ENCODE measurements at regions of chr3 and their contacts with region 1.

Region 1: DNA sequence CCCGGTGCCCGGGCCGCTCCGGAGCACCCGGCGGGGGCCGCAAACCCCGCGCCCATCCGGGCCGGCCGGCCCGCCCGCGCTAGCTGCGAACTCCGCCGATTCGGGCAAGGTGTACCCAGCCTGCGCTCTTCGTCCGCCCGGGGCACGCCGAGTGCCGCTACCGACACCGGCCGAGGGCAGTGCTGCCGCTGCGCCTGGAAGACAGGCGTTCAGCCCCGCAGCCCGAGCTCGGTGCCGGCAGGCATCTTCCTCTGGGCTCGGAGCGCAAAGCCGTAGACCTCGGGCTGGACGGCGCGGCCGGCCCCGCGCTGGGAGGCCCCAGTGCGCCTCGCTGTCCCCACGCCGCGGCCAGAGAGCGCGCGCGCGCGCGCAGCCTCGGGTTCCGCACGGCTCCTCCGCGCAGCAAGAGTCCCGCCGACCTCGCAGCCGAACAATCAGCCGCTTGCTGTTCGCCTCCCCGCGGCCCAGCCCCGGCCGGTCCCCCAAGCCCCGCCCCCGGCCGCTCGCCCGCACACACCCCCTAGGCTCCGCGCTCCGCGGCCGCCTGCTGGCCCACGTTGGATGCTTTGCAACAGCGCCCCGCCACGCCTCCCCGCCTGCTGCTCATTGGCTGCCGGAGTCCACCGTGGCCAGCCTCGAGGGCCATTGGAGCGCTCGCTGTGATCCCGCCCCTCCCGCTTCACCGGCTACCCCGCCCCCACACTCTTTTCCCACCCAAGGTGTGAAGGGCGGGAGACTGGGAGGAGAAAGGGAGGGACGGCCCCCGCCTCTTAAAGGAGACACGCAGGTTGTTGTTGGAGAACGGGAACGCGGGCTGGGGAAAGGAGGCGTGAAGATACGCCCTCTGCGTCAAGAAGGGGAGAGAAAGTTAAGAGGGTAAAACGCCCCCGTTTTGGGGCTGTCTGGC is at the start of gene LRIG1:
- DNase-seq: peak; percentile 98 to 100 (median 99)
- H3K4me3 ChIP-seq: peak within 1 kb of the TSS; percentile 65 to 98 (median 88)
- H3K27ac ChIP-seq: peak within 1 kb of the TSS; percentile 32 to 98 (median 92)
- H3K27me3 ChIP-seq: no peaks in the 10 kb centered on the region
- CTCF ChIP-seq: peak in 51 of 56 donors; percentile 13 to 76 (median 52)
- total RNA-seq, gene LRIG1: 65.6 to 291 (median 118) TPM

Region 2: GRCh38 chr3:66261355-66261754 is 239.5 kb before region 1 on chr3:
- intact Hi-C with region 1: loop called in 1 of 2 experiments (anchors 10 kb)
- DNase-seq: no peak
- H3K4me3 ChIP-seq: no peak overlapping the region
- H3K27ac ChIP-seq: no peak overlapping the region
- H3K27me3 ChIP-seq: no peaks in the 10 kb centered on the region
- CTCF ChIP-seq: no peak

Region 3: GRCh38 chr3:66418475-66418931 is 82.3 kb before region 1 on chr3:
- intact Hi-C with region 1: loop called in 1 of 2 experiments (anchors 2 kb)
- DNase-seq: peak in 8 of 10 donors; percentile 68 to 87 (median 77)
- H3K4me3 ChIP-seq: peak overlapping the region in 11 of 59 donors; percentile 4 to 35 (median 12)
- H3K27ac ChIP-seq: peak overlapping the region in 55 of 59 donors; percentile 6 to 90 (median 72)
- H3K27me3 ChIP-seq: no peaks in the 10 kb centered on the region
- CTCF ChIP-seq: peak in 52 of 56 donors; percentile 24 to 74 (median 46)

Region 4: DNA sequence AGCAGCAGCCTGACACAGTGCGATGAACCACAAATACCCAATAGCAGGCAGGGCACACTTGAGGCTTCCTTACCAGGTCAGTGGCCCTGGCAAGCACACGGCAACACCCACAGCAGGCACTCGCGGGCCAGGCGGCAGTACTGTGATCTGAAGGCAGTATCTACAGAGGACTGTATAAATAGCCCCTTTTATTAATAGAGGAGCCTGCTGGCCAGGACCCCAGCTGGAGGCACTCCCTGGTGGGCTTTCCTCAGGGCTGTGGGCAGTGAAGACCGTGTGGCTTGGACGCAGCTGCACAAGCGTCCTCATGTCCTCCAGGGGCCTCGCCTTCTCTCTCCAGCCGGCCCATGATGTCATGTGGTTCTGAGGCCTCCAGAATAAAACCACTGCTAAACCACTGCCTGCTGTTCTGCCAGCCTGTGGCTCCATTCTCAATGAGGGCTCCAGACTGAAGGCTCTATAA is 44.1 kb before region 1 on chr3:
- intact Hi-C with region 1: loop called (anchors 2 to 5 kb)
- DNase-seq: peak in 9 of 10 donors; percentile 46 to 71 (median 60)
- H3K4me3 ChIP-seq: peak overlapping the region in 1 of 59 donors; percentile 6
- H3K27ac ChIP-seq: peak overlapping the region in 57 of 59 donors; percentile 1 to 90 (median 74)
- H3K27me3 ChIP-seq: no peaks in the 10 kb centered on the region
- CTCF ChIP-seq: peak in 6 of 56 donors; percentile 3 to 24 (median 12)

Region 5: GRCh38 chr3:66537735-66538134 is 36.9 kb after region 1 on chr3:
- intact Hi-C with region 1: loop called in 1 of 2 experiments (anchors 5 kb)
- DNase-seq: peak in 1 of 10 donors; percentile 32
- H3K4me3 ChIP-seq: peak overlapping the region in 11 of 59 donors; percentile 0 to 22 (median 13)
- H3K27ac ChIP-seq: peak overlapping the region in 44 of 59 donors; percentile 0 to 82 (median 52)
- H3K27me3 ChIP-seq: no peaks in the 10 kb centered on the region
- CTCF ChIP-seq: peak in 6 of 56 donors; percentile 9 to 29 (median 18)

Measured in dorsolateral prefrontal cortex (tissue), 120 donors.